Cardiac septum (tissue), 1 donor: ENCODE measurements at regions of chr1 and their contacts with region 1.

Region 1: GRCh38 chr1:84753516-84754385 is 63.5 kb upstream of the SSX2IP start:
- DNase-seq: peak; percentile 83

Region 2: GRCh38 chr1:84143796-84144565 is 609.8 kb before region 1 on chr1 and contains the start of gene PRKACB:
- intact Hi-C with region 1: loop called (anchors 10 kb)
- DNase-seq: no peak
- total RNA-seq, gene PRKACB: 41.8 TPM

Region 3: DNA sequence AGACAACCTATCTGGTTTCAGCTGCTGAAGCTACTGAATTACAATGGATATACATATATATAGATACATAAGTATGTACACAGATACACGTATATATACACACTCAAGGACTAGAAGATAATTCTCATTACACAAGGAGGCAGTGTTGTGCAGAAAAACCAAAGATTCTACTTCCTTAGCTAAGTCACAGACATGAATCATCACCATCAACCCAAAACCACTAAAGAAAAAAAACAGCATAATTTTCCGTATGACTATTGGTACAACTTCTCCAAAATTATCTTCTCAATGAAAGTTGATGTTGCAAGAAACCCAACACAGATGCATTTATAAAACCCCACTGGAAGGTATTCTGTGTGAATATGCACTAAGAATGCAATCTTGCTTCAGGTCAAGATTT is 311.5 kb before region 1 on chr1:
- intact Hi-C with region 1: loop called (anchors 5 kb)
- DNase-seq: no peak

Region 4: DNA sequence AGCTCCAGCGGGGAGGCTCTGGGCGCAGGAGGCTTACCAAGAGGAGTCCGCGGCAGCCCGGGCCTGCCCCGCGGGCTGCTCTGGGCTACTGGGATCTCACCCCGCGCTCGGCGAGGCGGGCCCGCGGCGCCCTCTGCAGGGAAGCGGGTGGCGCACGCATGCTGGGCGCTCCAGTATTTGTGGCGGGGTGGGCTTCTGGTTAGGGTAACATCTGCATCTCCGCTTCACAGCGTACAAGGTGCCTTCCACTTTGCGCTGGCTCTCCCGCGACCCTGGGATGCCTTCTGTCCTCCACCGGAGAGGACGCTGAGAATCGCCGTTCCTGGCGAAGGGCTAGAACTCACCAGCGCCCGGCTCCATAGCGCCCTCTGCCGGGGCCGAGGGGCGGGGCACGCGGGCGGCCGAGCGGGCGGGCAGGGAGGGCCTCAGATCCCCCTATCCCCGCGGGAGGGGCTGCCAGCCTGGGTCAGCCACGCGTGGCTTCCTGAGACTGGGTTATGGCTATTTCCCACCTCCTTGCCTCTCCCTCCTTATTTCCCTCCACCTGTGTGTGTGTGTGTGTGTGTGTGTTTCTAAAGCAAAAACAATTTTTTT is 132.9 kb before region 1 on chr1:
- intact Hi-C with region 1: loop called (anchors 5 kb)
- DNase-seq: peak; percentile 85

Region 5: GRCh38 chr1:85033221-85033620 is 279.5 kb after region 1 on chr1:
- intact Hi-C with region 1: no loop called
- DNase-seq: no peak

Region 6: GRCh38 chr1:85244271-85245061 is 490.7 kb after region 1 on chr1:
- intact Hi-C with region 1: no loop called
- DNase-seq: no peak